Heart right ventricle (tissue), 16 donors: ENCODE measurements at regions of chr6 and their contacts with region 1.

Region 1: GRCh38 chr6:129251669-129252376 is 368.9 kb downstream of the LAMA2 start:
- DNase-seq: peak in 1 of 2 donors; percentile 48
- ATAC-seq: peak in 5 of 8 donors; percentile 6 to 60 (median 37)
- H3K4me3 ChIP-seq: no peak overlapping the region
- H3K27ac ChIP-seq: peak overlapping the region in 1 of 10 donors; percentile 13
- H3K4me1 ChIP-seq: peaks cover 3 to 52% (median 21%) of the 10 kb centered on the region in 9 donors
- H3K27me3 ChIP-seq: no peaks in the 10 kb centered on the region
- CTCF ChIP-seq: peak; percentile 58 to 79 (median 76)

Region 2: GRCh38 chr6:128725271-128726233 is 526.3 kb before region 1 on chr6:
- intact Hi-C with region 1: loop called in 3 of 10 experiments (anchors 10 kb)
- DNase-seq: peak in 1 of 2 donors; percentile 28
- ATAC-seq: peak in 1 of 8 donors; percentile 41
- H3K4me3 ChIP-seq: no peak overlapping the region
- H3K27ac ChIP-seq: no peak overlapping the region
- H3K4me1 ChIP-seq: no peaks in the 10 kb centered on the region
- H3K27me3 ChIP-seq: no peaks in the 10 kb centered on the region
- CTCF ChIP-seq: peak; percentile 16 to 75 (median 64)

Region 3: DNA sequence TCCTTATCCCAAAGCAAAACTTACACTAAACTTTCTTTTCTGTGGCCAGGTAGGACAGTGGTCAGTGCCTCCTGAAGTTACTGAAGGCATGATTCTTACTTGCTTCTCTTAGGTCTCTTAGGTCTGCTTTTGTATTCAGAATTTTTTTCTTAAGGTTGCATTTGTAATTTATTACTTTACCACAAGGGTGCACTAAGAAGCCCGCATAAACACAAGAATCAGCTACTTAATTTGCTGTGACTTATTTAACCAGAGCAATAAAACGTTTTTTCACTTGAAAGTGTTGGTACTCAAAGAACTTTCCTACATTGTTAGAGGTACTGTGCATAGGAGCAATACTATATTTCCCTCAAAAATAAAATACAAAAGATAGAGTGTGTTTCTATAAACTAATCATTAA is 444.2 kb before region 1 on chr6:
- intact Hi-C with region 1: loop called in 3 of 10 experiments (anchors 10 kb)
- DNase-seq: no peak
- ATAC-seq: peak in 2 of 8 donors; percentile 12 to 31
- H3K4me3 ChIP-seq: no peak overlapping the region
- H3K27ac ChIP-seq: peak overlapping the region in 1 of 10 donors; percentile 26
- H3K4me1 ChIP-seq: peaks cover 0 to 21% (median 5%) of the 10 kb centered on the region in 9 donors
- H3K27me3 ChIP-seq: no peaks in the 10 kb centered on the region
- CTCF ChIP-seq: peak; percentile 20 to 62 (median 52)

Region 4: DNA sequence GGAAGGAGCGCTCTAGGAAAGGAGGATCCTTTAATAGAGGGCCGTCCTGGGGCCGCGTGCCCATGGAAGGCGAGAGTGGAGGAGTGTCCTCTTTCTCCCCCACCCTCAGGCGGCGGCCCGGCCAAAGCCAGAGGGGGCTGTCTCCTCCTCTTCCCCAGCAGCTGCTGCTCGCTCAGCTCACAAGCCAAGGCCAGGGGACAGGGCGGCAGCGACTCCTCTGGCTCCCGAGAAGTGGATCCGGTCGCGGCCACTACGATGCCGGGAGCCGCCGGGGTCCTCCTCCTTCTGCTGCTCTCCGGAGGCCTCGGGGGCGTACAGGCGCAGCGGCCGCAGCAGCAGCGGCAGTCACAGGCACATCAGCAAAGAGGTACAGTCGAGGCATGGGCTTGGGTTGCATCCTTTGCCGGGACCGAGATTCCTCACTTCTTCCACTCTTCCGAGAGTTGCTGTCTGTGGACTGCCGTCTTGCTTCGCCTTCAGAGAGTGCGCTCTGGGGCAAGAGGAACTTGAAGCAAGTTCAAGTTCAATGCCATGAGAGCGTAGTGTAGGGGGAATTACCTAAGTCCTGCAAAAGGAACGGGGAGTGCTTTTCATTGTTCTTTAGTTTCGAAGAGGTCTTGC is 368.7 kb before region 1 on chr6 and contains the start of gene LAMA2:
- intact Hi-C with region 1: loop called in 2 of 10 experiments (anchors 10 kb)
- DNase-seq: peak; percentile 88 to 90
- ATAC-seq: peak; percentile 97 to 99 (median 98)
- H3K4me3 ChIP-seq: peak within 1 kb of the TSS; percentile 53 to 77 (median 70)
- H3K27ac ChIP-seq: peak within 1 kb of the TSS; percentile 81 to 92 (median 88)
- H3K4me1 ChIP-seq: peaks cover 0 to 21% (median 15%) of the 10 kb centered on the region in 9 donors
- H3K27me3 ChIP-seq: peaks cover 0 to 5% (median 0%) of the 10 kb centered on the region in 7 donors
- CTCF ChIP-seq: peak in 7 of 9 donors; percentile 24 to 61 (median 35)
- total RNA-seq, gene LAMA2: 144 to 293 (median 251) TPM

Region 5: GRCh38 chr6:129046526-129046925 is 205.3 kb before region 1 on chr6:
- intact Hi-C with region 1: no loop called
- DNase-seq: no peak
- ATAC-seq: no peak
- H3K4me3 ChIP-seq: no peak overlapping the region
- H3K27ac ChIP-seq: no peak overlapping the region
- H3K4me1 ChIP-seq: peaks cover 0 to 50% (median 0%) of the 10 kb centered on the region in 9 donors
- H3K27me3 ChIP-seq: no peaks in the 10 kb centered on the region
- CTCF ChIP-seq: no peak

Region 6: DNA sequence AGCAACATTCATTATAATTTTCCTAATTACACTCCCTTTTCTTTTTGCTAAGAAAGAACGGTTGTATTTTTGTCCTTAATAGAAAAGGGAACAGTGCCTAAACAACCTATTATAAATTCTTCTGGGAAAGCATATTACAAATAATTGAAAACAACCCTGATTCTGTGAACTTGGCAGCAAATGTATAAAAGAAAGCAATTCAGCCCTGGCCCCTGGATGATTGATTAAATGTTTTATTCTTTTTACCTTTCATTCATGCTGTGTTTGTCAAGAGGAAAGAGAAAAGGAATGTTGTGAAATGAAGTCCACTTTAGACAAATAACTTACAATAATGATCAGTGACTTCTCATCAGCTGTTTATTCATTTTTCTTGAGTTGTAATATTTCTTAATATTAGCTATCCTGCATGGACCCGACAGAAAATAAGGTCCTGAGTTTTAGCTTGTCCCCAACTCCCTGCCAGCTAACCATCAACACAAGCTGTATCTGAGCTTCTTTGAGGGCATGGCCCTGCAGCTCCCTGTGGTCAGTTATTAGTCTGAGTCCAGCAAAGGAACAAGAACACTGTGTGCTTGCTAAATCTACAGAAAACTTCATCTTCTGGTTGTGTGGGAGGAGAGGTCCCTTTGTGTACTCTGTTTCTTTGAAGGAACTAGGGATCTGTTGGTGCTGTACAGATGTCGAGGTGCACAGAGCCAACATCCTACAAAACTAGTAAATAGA is 120.7 kb before region 1 on chr6:
- intact Hi-C with region 1: loop called in 2 of 10 experiments (anchors 5 to 10 kb)
- DNase-seq: peak in 1 of 2 donors; percentile 20
- ATAC-seq: peak; percentile 27 to 78 (median 69)
- H3K4me3 ChIP-seq: no peak overlapping the region
- H3K27ac ChIP-seq: peak overlapping the region; percentile 16 to 86 (median 70)
- H3K4me1 ChIP-seq: peaks cover 8 to 68% (median 57%) of the 10 kb centered on the region in 9 donors
- H3K27me3 ChIP-seq: no peaks in the 10 kb centered on the region
- CTCF ChIP-seq: no peak

Region 7: DNA sequence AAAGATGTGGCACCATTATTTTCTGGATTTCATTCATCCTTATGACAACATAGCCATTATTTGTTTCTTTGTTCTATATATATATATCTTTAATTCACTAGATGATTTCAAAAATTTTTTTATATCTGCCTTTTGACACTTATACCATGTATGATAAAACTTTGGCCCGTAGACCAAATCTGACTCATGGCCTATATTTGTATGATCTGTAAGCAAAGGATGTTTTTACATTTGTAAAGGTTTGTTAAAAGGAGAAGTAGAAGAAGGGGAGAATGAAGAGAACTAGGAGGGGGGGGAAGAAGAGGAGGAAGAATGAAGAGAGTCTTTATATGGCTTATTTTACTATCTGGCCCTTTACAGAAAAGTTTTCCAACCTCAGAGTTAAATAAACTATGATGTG is 89.2 kb before region 1 on chr6:
- intact Hi-C with region 1: no loop called
- DNase-seq: no peak
- ATAC-seq: peak in 3 of 8 donors; percentile 21 to 53 (median 22)
- H3K4me3 ChIP-seq: no peak overlapping the region
- H3K27ac ChIP-seq: peak overlapping the region in 3 of 10 donors; percentile 21 to 54 (median 38)
- H3K4me1 ChIP-seq: peaks cover 0 to 14% (median 0%) of the 10 kb centered on the region in 9 donors
- H3K27me3 ChIP-seq: no peaks in the 10 kb centered on the region
- CTCF ChIP-seq: no peak